PC-3 (cell line): ENCODE measurements at regions of chr17 and their contacts with region 1.

Region 1: GRCh38 chr17:28252436-28252835 is 66.6 kb upstream of the TMEM97 start:
- DNase-seq: peak; percentile 80
- ATAC-seq: peak; percentile 48
- H3K4me3 ChIP-seq: no peak overlapping the region
- H3K27ac ChIP-seq: no peak overlapping the region
- H3K4me1 ChIP-seq: peaks cover 12% of the 10 kb centered on the region
- H3K27me3 ChIP-seq: no peaks in the 10 kb centered on the region
- CTCF ChIP-seq: no peak

Region 2: GRCh38 chr17:27276653-27277156 is 975.7 kb before region 1 on chr17:
- CTCF ChIA-PET with region 1: no interaction called
- POLR2A ChIA-PET with region 1: interaction called, 12 read pairs
- intact Hi-C with region 1: no loop called
- DNase-seq: no peak
- ATAC-seq: no peak
- H3K4me3 ChIP-seq: no peak overlapping the region
- H3K27ac ChIP-seq: no peak overlapping the region
- H3K4me1 ChIP-seq: no peaks in the 10 kb centered on the region
- H3K27me3 ChIP-seq: no peaks in the 10 kb centered on the region
- CTCF ChIP-seq: no peak

Region 3: DNA sequence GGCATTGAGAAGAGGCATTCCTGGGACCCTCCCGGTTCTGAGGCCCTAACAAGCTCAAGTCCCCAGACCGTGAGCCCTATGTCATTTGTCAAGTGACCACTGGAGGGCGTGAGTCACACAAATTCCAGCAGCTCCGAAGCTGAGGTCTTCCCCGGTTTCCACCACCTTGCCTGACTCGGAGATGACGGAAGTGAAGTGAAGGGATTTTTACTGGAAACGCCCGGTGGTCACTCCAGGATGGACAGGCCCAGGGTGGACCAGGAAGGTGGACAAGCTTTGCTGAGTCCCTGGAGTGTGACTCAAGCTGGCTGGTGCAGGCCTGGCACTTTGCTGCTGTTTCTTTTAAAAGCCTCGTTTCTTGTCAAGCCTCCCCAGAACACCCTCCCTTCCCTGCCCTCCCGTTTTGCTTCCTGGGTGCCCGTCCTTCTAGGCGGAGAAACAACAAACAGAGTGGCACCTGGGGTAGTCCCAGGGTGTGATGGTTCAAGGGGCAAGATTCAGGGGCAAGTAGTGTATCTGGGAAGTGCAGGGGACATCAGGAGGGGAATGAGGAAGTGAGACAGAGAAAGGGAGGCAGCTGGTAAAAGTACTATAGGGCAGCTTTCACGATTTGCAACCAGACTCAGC is 446.8 kb before region 1 on chr17:
- CTCF ChIA-PET with region 1: no interaction called
- POLR2A ChIA-PET with region 1: no interaction called
- intact Hi-C with region 1: loop called (anchors 5 kb)
- DNase-seq: peak; percentile 83
- ATAC-seq: peak; percentile 97
- H3K4me3 ChIP-seq: peak overlapping the region; percentile 64
- H3K27ac ChIP-seq: no peak overlapping the region
- H3K4me1 ChIP-seq: peaks cover 4% of the 10 kb centered on the region; the same call in 1 of the 2 replicates
- H3K27me3 ChIP-seq: peaks cover 3% of the 10 kb centered on the region; the same call in 1 of the 2 replicates
- CTCF ChIP-seq: peak; percentile 76

Region 4: GRCh38 chr17:27892866-27893769 is 359.3 kb before region 1 on chr17 and contains the start of gene LYRM9:
- CTCF ChIA-PET with region 1: no interaction called
- POLR2A ChIA-PET with region 1: no interaction called
- intact Hi-C with region 1: loop called (anchors 10 kb)
- DNase-seq: peak; percentile 83
- ATAC-seq: peak; percentile 99
- H3K4me3 ChIP-seq: peak within 1 kb of the TSS; percentile 70
- H3K27ac ChIP-seq: no peak within 1 kb of the TSS
- H3K4me1 ChIP-seq: peaks cover 4% of the 10 kb centered on the region
- H3K27me3 ChIP-seq: no peaks in the 10 kb centered on the region
- CTCF ChIP-seq: peak; percentile 72
- total RNA-seq, gene LYRM9: 0.52 and 0.58 TPM in 2 replicates

Region 5: GRCh38 chr17:28318759-28319660 is 66.6 kb after region 1 on chr17 and contains the start of gene TMEM97:
- CTCF ChIA-PET with region 1: no interaction called
- POLR2A ChIA-PET with region 1: no interaction called
- intact Hi-C with region 1: loop called (anchors 10 kb)
- DNase-seq: peak; percentile 94
- ATAC-seq: peak; percentile 97
- H3K4me3 ChIP-seq: peak within 1 kb of the TSS; percentile 73
- H3K27ac ChIP-seq: peak within 1 kb of the TSS; percentile 5; the same call in 1 of the 2 replicates
- H3K4me1 ChIP-seq: peaks cover 44% of the 10 kb centered on the region
- H3K27me3 ChIP-seq: no peaks in the 10 kb centered on the region
- CTCF ChIP-seq: 0 out of 2 replicates have a peak, but pooled peaks have one; percentile 9
- total RNA-seq, gene TMEM97: 30.3 and 40.5 TPM in 2 replicates